AG04450 (cell line): ENCODE measurements at regions of chr2 and their contacts with region 1.

Region 1: DNA sequence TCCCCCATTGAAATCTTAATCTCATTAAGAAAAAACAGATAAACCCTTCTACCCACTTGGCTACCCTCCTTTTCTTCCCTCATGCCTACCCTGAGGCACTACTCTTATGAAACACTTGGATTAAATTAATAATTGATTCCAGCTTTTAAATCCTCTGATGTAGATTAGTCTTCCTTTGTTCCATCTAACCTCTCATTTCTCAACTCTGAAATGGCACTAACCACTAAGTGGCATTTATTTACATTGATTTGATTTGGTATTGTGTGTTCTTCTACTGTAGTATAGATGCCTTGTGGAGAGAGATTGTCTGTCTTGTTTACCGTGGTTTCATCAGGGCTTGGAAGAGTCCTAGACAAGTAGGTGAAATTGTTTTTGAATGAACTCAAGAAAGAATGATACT is 26.7 kb downstream of the ITGA4 start:
- DNase-seq: no peak
- H3K4me3 ChIP-seq: no peak overlapping the region
- H3K27ac ChIP-seq: no peak overlapping the region
- H3K27me3 ChIP-seq: no peaks in the 10 kb centered on the region
- CTCF ChIP-seq: no peak

Region 2: GRCh38 chr2:181466661-181467576 is 17.0 kb before region 1 on chr2:
- CTCF ChIA-PET with region 1: interaction called, 13 read pairs
- POLR2A ChIA-PET with region 1: no interaction called
- DNase-seq: peak; percentile 20
- H3K4me3 ChIP-seq: no peak overlapping the region
- H3K27ac ChIP-seq: no peak overlapping the region
- H3K27me3 ChIP-seq: no peaks in the 10 kb centered on the region
- CTCF ChIP-seq: peak; percentile 88

Region 3: DNA sequence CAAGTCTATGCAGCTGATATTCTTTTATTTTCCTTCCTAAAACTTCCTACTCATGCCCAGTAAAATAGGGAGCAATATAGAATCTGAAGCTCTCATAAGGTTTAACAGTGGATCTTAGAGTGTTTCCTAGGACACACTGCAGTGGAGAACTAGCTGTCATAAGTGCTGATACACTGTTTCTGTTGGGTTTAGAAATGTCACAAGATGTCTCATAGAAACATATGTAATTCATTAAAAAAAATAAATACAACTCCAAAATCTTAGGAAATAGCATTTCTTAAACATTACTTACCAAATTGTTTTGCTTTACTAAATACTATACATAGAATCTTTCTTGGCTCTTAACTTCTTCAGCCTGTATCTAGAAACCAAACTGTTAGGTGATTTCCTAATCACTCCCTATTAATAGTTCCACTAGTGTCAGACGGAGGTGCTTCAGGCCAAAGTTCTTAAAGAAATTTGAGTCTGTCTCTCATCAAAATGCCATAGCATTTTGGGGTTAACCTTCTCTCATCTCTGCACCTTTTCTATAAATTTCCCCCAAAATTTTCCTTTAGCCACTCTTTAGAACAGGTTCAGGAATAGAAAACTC is 79.3 kb after region 1 on chr2:
- CTCF ChIA-PET with region 1: no interaction called
- POLR2A ChIA-PET with region 1: no interaction called
- DNase-seq: no peak
- H3K4me3 ChIP-seq: no peak overlapping the region
- H3K27ac ChIP-seq: no peak overlapping the region
- H3K27me3 ChIP-seq: no peaks in the 10 kb centered on the region
- CTCF ChIP-seq: no peak

Region 4: GRCh38 chr2:181614874-181615638 is 131.2 kb after region 1 on chr2:
- CTCF ChIA-PET with region 1: no interaction called
- POLR2A ChIA-PET with region 1: no interaction called
- DNase-seq: no peak
- H3K4me3 ChIP-seq: no peak overlapping the region
- H3K27ac ChIP-seq: no peak overlapping the region
- H3K27me3 ChIP-seq: no peaks in the 10 kb centered on the region
- CTCF ChIP-seq: no peak